ENCODE measurements at regions of chr6 and their contacts with region 1.

Region 1: DNA sequence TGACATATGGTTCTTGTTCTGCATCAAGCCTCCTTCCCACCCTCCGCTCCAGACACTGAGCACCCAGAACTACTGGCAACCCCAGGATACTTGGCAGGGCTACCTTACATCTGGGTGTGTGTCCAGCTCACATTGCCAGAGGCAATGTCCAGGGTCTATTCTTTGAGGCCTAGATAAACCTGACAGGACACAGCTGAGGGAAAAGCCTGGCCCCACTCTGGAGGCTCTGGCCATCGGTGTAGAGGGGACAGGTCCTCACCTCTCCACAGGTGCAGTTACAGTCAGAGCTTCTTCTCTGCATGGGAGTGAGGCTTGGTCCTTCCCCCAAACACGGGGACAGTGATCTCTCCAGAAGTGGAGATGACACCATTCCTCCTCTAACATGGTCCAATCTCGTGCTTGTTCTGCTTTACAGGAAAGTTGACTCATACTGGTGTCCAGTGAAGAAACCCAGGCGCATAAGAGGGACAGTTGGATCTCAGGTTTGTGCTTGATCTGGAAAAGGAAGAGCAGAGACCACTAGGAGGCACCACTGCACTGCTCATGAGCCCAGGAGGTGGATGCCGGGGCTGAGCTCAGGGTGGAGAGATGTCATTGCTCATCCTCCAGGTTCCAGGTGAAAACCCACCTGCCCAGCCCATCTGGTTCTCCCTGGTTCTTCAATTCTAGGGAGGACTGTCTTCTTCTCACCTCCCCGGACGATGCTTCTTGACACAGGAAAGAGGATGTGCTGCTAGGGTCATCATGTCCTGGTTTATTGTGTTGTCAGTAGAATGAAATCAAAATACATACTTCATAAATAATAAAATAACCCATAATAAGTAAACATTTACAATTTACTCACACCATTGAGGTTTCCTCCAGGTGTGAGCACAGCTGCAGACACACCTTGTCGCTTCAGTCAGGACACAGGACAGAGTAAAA is 14.7 kb downstream of the HLA-F start:
- DNase-seq: peak; percentile 50
- H3K4me3 ChIP-seq: no peak overlapping the region
- H3K27ac ChIP-seq: no peak overlapping the region
- H3K4me1 ChIP-seq: no peaks in the 10 kb centered on the region
- H3K27me3 ChIP-seq: peaks cover 16% of the 10 kb centered on the region
- CTCF ChIP-seq: peak; percentile 69

Region 2: GRCh38 chr6:28489366-28490204 is 1248.4 kb before region 1 on chr6:
- CTCF ChIA-PET with region 1: no interaction called
- POLR2A ChIA-PET with region 1: no interaction called
- intact Hi-C with region 1: no loop called
- DNase-seq: peak; percentile 90
- H3K4me3 ChIP-seq: peak overlapping the region; percentile 62
- H3K27ac ChIP-seq: peak overlapping the region; percentile 79
- H3K4me1 ChIP-seq: no peaks in the 10 kb centered on the region
- H3K27me3 ChIP-seq: no peaks in the 10 kb centered on the region
- CTCF ChIP-seq: no peak

Region 3: DNA sequence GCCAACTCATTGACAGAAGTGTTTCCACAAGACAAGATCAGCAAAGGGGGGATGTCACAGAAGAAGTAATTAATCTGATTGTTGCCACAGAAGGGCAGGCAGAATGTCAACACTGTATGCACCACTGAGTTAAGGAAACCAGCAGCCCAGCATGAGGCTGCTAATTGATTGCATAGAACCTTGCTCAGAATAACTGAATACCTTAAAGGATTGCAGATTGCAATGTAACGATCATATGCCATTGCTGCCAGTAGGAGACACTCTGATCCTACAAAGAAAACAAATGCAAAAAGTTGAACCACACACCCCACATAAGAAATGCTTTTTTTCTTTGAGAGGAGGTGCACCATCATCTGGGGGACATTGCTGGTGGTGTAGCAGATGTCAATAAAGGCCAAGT is 382.4 kb before region 1 on chr6:
- CTCF ChIA-PET with region 1: no interaction called
- POLR2A ChIA-PET with region 1: no interaction called
- intact Hi-C with region 1: no loop called
- DNase-seq: no peak
- H3K4me3 ChIP-seq: no peak overlapping the region
- H3K27ac ChIP-seq: no peak overlapping the region
- H3K4me1 ChIP-seq: no peaks in the 10 kb centered on the region
- H3K27me3 ChIP-seq: peaks cover 9% of the 10 kb centered on the region
- CTCF ChIP-seq: no peak

Region 4: DNA sequence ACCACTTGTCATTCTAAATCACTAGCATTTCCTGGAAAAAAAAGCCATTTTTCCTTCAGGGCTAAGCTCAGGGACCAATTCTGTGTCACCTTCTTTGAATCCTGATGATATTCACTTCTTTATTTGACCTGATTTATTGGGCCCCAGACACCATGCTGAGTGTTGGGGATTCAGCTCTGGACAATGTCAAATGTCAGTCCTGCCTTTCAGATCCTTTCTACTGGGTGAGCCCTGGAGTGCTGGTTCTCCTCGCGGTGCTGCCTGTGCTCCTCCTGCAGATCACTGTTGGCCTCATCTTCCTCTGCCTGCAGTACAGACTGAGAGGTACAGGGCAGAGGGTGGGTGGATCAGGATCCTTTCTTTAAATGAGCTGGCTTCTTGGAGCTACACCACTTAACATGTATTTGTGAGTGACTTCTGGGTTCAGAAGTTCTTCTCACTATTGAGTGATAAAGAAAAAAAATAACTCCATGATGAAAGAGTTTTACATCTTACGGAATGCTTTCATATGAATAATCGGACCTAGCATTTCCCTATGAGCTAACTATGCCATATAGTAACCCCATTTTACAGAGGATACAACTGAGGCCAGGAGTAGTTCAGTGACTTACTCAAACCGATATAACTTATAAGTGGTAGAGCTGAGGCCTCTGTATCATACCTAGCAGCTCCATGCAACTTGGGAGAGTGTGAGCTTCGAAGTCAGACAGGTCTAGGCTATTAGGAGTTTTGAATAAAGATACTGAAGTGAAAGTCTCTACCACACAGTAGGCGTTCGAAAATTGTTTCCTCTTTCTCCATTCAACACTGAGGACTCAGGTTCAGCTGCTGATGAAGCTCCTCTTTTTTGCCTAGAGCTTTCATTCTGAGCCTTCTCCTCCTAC is 71.8 kb before region 1 on chr6:
- CTCF ChIA-PET with region 1: no interaction called
- POLR2A ChIA-PET with region 1: no interaction called
- intact Hi-C with region 1: no loop called
- DNase-seq: no peak
- H3K4me3 ChIP-seq: no peak overlapping the region
- H3K27ac ChIP-seq: no peak overlapping the region
- H3K4me1 ChIP-seq: no peaks in the 10 kb centered on the region
- H3K27me3 ChIP-seq: no peaks in the 10 kb centered on the region
- CTCF ChIP-seq: no peak

Region 5: DNA sequence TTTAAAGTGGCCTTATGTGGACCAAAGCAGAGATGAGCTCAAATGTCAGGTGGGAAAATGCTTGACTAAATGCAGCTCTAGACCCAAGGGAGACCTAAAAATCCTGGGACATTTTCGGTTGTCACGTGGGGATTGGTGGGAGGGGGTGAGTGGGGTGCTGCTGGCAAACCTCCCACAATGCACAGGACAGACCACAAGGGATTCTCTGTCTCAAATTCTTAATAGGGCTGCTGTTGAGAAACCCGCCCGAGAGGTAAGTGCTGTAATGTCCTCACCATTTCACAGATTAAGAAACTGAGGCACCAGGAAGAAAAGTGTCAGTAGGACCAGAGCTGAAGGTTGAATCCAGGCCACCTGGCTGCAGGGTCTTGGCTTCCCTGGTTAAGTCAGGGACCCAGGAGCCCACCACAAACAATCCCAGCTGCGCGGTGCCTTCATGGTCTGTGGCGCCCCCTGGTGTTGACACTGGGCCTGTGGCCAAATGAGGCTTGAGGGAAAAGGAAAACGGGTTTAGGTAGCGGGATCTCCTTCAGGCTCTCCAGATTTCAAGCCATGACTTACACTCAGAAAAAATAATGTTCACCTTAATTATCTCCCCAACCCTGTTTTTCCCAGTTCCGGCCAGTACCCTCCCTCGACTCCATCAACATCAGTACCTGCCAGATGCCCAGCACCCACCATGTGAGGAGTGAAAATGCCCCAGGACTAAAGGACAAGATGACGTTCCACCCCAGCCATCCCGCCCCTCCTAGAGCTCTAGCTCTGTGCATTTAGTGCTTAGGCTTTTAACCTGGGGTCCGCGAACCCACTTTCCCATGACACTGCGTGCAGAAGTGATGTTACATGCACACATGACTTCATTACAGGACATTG is 96.8 kb after region 1 on chr6:
- CTCF ChIA-PET with region 1: interaction called, 10 read pairs
- POLR2A ChIA-PET with region 1: no interaction called
- intact Hi-C with region 1: loop called (anchors 2 kb)
- DNase-seq: peak; percentile 33
- H3K4me3 ChIP-seq: no peak overlapping the region
- H3K27ac ChIP-seq: no peak overlapping the region
- H3K4me1 ChIP-seq: no peaks in the 10 kb centered on the region
- H3K27me3 ChIP-seq: peaks cover 35% of the 10 kb centered on the region
- CTCF ChIP-seq: peak; percentile 89

Region 6: GRCh38 chr6:30013291-30013922 is 275.4 kb after region 1 on chr6:
- CTCF ChIA-PET with region 1: no interaction called
- POLR2A ChIA-PET with region 1: no interaction called
- intact Hi-C with region 1: loop called (anchors 10 kb)
- DNase-seq: peak; percentile 24
- H3K4me3 ChIP-seq: no peak overlapping the region
- H3K27ac ChIP-seq: no peak overlapping the region
- H3K4me1 ChIP-seq: no peaks in the 10 kb centered on the region
- H3K27me3 ChIP-seq: peaks cover 4% of the 10 kb centered on the region
- CTCF ChIP-seq: peak; percentile 80

Region 7: DNA sequence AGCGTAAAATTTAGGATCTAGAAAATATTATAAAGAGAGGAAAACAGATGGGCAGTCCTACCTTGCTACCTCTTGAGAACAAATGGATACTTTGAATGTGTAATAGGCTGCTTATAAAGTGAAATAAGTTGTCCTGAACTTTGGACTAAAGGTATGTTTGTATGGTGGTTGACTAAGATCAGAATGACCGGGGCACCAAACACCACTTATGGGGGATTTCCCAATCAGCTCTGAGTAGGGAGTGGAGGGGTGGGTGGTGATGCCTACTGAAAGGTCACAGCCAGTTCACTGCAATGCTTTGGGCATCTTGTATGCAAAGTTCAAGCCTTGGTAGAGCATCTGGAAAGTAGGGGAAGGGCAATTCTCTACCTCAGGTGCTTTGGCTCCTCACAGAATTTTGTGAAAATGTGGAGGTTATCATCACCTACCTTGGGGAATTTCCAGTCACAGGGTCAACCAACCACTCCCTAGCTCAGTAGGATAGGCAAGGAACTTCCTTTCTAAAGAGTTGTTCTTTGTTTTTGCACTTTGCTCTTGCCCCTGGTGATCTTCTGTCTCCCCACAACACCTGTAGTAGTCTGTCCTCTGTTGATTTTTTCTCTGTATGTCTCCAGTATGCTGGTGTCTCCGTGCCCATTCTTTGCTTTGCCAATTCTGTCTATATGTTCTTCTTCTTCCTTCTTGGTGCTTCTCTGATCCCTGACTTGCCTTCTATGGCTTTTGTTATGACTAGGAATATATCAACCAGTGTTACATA is 375.2 kb after region 1 on chr6 and contains the start of gene TRIM31:
- CTCF ChIA-PET with region 1: no interaction called
- POLR2A ChIA-PET with region 1: no interaction called
- intact Hi-C with region 1: no loop called
- DNase-seq: no peak
- H3K4me3 ChIP-seq: no peak within 1 kb of the TSS
- H3K27ac ChIP-seq: no peak within 1 kb of the TSS
- H3K4me1 ChIP-seq: no peaks in the 10 kb centered on the region
- H3K27me3 ChIP-seq: peaks cover 47% of the 10 kb centered on the region
- CTCF ChIP-seq: no peak
- total RNA-seq, gene TRIM31: not detected in 2 replicates

Measured in A673 (cell line).